ENCODE measurements at regions of chr7 and their contacts with region 1.

Region 1: GRCh38 chr7:77771901-77772300 is 26.3 kb downstream of the TMEM60 start:
- DNase-seq: no peak
- H3K4me3 ChIP-seq: no peak overlapping the region
- H3K27ac ChIP-seq: no peak overlapping the region
- H3K4me1 ChIP-seq: no peaks in the 10 kb centered on the region
- H3K27me3 ChIP-seq: no peaks in the 10 kb centered on the region
- CTCF ChIP-seq: no peak
- EP300 ChIP-seq: no peak
- POLR2A ChIP-seq: no peak

Region 2: GRCh38 chr7:77738871-77739270 is 33.0 kb before region 1 on chr7:
- intact Hi-C with region 1: loop called in 1 of 4 experiments (anchors 5 kb)
- DNase-seq: no peak
- H3K4me3 ChIP-seq: no peak overlapping the region
- H3K27ac ChIP-seq: no peak overlapping the region
- H3K4me1 ChIP-seq: peaks cover 3% of the 10 kb centered on the region
- H3K27me3 ChIP-seq: no peaks in the 10 kb centered on the region
- CTCF ChIP-seq: no peak
- EP300 ChIP-seq: no peak
- POLR2A ChIP-seq: no peak